GM13977 (cell line): ENCODE measurements at regions of chrX and their contacts with region 1.

Region 1: GRCh38 chrX:18389968-18390367 is 35.4 kb upstream of the CDKL5 start:
- DNase-seq: no peak
- CTCF ChIP-seq: peak; percentile 34

Region 2: DNA sequence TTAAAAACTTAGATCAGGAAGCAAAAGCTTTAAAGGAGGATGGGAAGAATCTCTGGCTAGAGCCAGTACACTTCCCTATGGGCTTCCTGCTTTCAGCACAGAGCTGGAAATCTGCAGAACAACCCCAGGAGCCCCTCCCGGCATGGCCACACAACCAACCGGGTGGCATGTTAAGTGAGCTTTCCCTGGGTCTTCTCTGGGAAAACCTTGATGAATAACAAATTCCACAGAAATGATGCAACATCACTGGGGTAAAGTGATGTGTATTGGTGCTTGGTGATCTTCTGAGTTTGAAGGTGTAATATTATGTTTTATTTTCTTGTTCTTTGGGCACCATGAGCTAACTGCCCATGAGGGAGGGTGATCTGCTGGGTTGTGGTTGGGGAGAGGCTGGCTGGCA is 992.9 kb before region 1 on chrX:
- in situ Hi-C with region 1: no loop called
- DNase-seq: no peak
- CTCF ChIP-seq: no peak

Region 3: GRCh38 chrX:17425136-17425535 is 964.8 kb before region 1 on chrX:
- in situ Hi-C with region 1: no loop called
- DNase-seq: no peak
- CTCF ChIP-seq: no peak

Region 4: DNA sequence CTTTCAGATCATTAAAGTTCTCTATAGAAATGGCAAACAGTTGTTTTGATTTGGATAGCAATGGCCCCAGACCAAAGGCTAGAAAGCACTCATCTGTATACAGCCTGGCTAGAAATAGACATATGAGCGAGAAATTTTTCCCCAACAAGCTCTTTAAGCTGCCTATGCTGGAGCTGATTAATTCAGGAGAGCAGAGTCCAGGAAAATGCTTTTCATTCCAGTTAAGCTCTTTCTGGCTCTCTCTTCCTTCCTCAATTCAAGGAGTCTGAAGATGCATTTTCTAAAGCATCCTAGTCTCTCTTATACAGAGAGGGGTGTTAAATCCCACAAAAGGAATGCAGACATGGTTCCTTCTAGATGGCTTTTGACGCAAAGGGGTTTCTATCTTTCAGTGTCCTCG is 387.2 kb before region 1 on chrX:
- in situ Hi-C with region 1: no loop called
- DNase-seq: no peak
- CTCF ChIP-seq: no peak

Region 5: GRCh38 chrX:18252644-18253359 is 137.2 kb before region 1 on chrX:
- in situ Hi-C with region 1: no loop called
- DNase-seq: no peak
- CTCF ChIP-seq: no peak

Region 6: GRCh38 chrX:19334945-19335626 is 945.1 kb after region 1 on chrX:
- in situ Hi-C with region 1: loop called (anchors 10 kb)
- DNase-seq: peak; percentile 46
- CTCF ChIP-seq: peak; percentile 53